ENCODE measurements at regions of chr9 and their contacts with region 1.

Region 1: DNA sequence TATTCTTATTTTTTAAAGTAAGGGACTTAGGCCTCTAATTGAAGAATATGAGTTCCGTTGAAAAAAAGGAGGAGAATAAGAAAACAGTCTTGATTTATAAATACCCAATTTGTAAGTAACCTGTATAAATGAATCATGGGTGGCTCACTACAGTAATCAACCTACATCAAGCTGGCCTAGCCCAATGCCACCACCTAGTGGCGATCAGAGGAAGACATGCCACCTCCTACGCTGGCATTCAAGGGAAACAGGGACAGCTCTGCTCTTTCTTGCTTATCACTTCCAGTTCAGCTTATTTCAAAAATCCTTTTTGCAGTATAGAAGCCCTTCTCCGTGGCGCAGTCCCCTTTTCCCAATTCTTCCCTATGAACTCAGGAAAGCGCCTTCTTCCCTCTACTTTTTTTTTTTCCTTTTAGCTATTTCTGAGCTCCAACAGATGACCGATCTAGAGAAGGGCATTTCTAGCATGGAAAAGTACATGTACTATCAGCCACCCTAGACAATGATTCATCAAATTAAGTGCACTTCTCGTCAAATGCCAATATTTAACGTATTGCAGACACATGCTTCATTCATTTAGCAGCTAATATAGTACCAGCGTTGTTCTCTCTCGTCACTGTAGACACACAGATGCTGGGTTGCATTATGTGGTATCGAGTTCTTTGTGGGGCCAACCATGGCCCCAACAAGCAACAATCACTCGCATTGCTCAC is 28.3 kb downstream of the PTPN3 start:
- DNase-seq: peak; percentile 59 to 82
- ATAC-seq: peak; percentile 79 to 87
- H3K4me3 ChIP-seq: no peak overlapping the region
- H3K27ac ChIP-seq: peak overlapping the region; percentile 79 to 91 (median 84)
- H3K4me1 ChIP-seq: peaks cover 54% of the 10 kb centered on the region in 2 donors
- H3K27me3 ChIP-seq: no peaks in the 10 kb centered on the region
- CTCF ChIP-seq: peak; percentile 84 to 94 (median 92)
- POLR2A ChIP-seq: no peak

Region 2: GRCh38 chr9:109422641-109423040 is 47.2 kb before region 1 on chr9:
- in situ Hi-C with region 1: loop called in 1 of 4 experiments (anchors 5 kb)
- intact Hi-C with region 1: loop called (anchors 1 kb)
- DNase-seq: no peak
- ATAC-seq: no peak
- H3K4me3 ChIP-seq: no peak overlapping the region
- H3K27ac ChIP-seq: peak overlapping the region; percentile 90 to 95 (median 92)
- H3K4me1 ChIP-seq: peaks cover 34 to 52% of the 10 kb centered on the region in 2 donors
- H3K27me3 ChIP-seq: no peaks in the 10 kb centered on the region
- CTCF ChIP-seq: no peak
- POLR2A ChIP-seq: no peak

Region 3: DNA sequence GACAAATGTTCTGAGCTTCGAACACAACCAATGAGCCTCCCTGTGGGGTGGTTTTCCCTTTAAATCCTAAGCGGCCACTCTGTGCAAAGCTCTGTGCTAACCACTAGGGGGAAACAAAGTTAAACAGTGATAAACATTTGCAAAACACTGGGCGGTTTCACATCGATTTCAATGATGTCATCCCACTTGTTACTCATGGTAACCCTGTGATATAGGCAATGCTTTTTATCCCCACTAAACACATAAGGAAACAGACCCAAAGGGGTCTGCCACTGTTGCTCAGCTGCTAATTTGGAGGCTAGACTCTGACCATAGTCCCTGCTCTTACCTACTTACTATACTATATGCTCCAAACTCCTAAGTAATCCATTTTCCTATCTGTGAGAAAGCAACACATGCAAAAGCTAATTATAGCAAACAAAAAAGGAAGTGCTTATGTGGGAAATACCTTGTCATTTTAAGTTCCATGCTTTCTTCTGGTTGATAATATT is 29.0 kb before region 1 on chr9:
- in situ Hi-C with region 1: no loop called
- intact Hi-C with region 1: loop called (anchors 1 kb)
- DNase-seq: no peak
- ATAC-seq: peak; percentile 67 to 68
- H3K4me3 ChIP-seq: no peak overlapping the region
- H3K27ac ChIP-seq: peak overlapping the region; percentile 36 to 61 (median 50)
- H3K4me1 ChIP-seq: peaks cover 23 to 34% of the 10 kb centered on the region in 2 donors
- H3K27me3 ChIP-seq: no peaks in the 10 kb centered on the region
- CTCF ChIP-seq: peak; percentile 74 to 86 (median 82)
- POLR2A ChIP-seq: no peak

Region 4: DNA sequence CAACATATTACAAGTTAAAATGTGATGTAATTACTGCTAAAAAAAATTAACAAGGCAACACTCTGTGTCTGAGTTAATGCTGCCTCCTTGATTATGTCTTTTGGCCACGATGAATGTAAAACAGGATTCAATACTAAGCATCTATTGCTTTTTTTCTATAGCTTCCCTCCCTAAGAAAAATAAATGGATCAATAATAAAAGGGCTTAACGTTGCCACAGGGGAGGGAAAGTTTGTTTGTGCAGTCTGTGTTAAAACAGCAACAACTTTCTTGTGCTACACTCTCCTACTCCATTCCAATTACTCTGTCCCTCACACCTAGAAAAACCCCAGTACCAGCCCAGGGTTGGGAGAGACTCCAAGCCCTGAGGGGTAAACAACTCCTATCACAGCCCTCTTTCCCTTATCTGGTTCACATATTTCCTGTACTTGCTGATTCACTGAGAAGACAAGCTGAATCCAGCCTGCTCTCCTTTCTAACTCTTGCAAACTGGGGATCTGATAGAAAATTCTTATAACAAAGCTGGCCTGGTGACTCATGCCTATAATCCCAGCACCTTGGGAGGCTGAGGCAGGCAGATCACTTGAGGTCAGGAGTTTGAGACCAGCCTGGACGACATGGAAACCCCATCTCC is 16.5 kb before region 1 on chr9:
- in situ Hi-C with region 1: no loop called
- intact Hi-C with region 1: loop called (anchors 2 kb)
- DNase-seq: no peak
- ATAC-seq: no peak
- H3K4me3 ChIP-seq: no peak overlapping the region
- H3K27ac ChIP-seq: peak overlapping the region; percentile 6 to 82 (median 66)
- H3K4me1 ChIP-seq: peaks cover 21 to 35% of the 10 kb centered on the region in 2 donors
- H3K27me3 ChIP-seq: no peaks in the 10 kb centered on the region
- CTCF ChIP-seq: no peak
- POLR2A ChIP-seq: no peak

Measured in gastrocnemius medialis (tissue), 4 donors.